ENCODE measurements at regions of chr1 and their contacts with region 1.

Region 1: GRCh38 chr1:114780344-114781226 is at the start of gene SIKE1:
- DNase-seq: peak; percentile 92
- H3K4me3 Mint-ChIP-seq: peak within 1 kb of the TSS; percentile 100
- H3K27ac Mint-ChIP-seq: peak within 1 kb of the TSS; percentile 96
- H3K4me1 Mint-ChIP-seq: peaks cover 34% of the 10 kb centered on the region
- H3K27me3 Mint-ChIP-seq: peaks cover 4% of the 10 kb centered on the region
- total RNA-seq, gene SIKE1: 59.4 and 65.0 TPM in 2 replicates

Region 2: GRCh38 chr1:114581335-114582287 is 199.0 kb before region 1 on chr1 and contains the start of gene BCAS2:
- intact Hi-C with region 1: loop called (anchors 1 kb)
- DNase-seq: peak; percentile 94
- H3K4me3 Mint-ChIP-seq: peak within 1 kb of the TSS; percentile 91
- H3K27ac Mint-ChIP-seq: peak within 1 kb of the TSS; percentile 92
- H3K4me1 Mint-ChIP-seq: peaks cover 34% of the 10 kb centered on the region
- H3K27me3 Mint-ChIP-seq: peaks cover 5% of the 10 kb centered on the region
- total RNA-seq, gene BCAS2: 61.9 and 63.0 TPM in 2 replicates

Region 3: DNA sequence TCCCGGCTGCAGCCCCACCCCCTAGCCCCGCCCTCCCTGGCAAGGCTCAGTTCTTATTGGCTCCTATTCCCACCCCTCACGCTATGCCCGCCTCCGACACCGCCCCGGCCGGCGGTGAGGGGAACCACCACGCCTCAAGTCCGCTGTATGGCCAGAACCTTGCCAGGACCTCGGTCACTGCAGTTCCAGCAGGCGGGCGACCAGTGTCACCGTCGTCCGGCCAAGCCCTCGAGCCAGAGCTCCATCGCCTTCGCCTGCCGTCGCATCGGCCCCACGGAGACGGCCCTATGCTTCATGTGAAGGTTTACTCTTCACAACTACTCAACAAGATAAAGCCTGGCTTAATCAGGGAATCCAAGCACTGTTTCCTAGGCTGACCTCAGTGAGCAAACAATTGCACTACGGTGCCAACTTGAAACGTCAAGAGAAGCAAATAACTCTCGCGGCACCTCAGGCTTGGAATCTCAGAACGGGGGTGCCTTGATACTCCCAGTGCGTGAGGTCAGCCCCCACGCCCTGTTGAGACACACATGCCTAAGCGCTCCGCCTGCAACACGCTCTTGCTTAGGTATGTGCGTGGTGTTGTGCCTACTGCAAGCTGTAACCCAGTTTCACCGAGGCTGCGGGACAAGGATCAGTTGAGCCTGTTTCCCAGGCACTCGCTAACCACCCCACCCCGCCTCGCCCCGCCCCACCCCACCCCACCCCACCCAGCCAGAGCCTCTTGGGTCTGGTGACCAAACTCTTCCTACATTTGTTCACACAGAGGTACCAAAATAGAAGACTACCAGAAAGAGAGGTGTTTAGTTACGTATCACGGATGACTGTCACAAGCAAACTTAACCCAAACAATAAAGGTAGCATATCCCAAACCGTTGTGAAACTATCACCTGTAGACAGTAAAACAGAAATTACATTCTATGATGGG is 110.2 kb before region 1 on chr1:
- intact Hi-C with region 1: loop called (anchors 1 kb)
- DNase-seq: peak; percentile 76
- H3K4me3 Mint-ChIP-seq: peak overlapping the region; percentile 89
- H3K27ac Mint-ChIP-seq: peak overlapping the region; percentile 20
- H3K4me1 Mint-ChIP-seq: peaks cover 8% of the 10 kb centered on the region
- H3K27me3 Mint-ChIP-seq: peaks cover 48% of the 10 kb centered on the region

Region 4: GRCh38 chr1:114745291-114745690 is 35.3 kb before region 1 on chr1:
- intact Hi-C with region 1: loop called (anchors 5 kb)
- DNase-seq: no peak
- H3K4me3 Mint-ChIP-seq: no peak overlapping the region
- H3K27ac Mint-ChIP-seq: no peak overlapping the region
- H3K4me1 Mint-ChIP-seq: peaks cover 55% of the 10 kb centered on the region
- H3K27me3 Mint-ChIP-seq: no peaks in the 10 kb centered on the region

Region 5: DNA sequence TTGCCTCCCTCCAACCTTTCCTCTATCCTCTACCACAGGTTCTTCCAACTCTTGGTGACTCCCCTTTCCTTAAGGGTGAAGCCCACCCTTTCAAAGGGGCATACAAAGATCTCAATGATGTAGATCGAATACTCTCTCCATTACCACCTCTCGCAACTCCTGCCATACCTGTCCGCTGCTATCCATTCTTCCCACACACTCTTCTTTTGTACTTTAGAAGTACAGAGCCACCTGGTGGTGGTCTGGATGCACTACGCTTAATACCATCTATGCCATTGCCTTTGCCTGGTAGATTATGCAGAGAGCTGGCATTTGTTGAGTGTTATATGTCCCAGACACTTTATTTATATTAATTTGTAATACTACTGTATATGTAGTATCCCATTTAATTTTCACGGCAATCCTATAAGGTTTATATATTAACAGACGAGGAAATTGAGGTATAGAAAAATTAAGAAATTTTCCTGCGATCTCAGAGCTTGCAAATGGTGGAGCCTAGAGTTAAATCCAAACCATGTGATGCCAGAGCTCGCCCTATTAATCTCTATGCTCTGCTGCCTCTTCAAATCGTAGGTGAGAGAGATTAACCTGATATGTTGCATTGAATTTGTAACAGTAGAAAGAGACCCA is 272.0 kb after region 1 on chr1:
- intact Hi-C with region 1: no loop called
- DNase-seq: peak; percentile 20
- H3K4me3 Mint-ChIP-seq: no peak overlapping the region
- H3K27ac Mint-ChIP-seq: no peak overlapping the region
- H3K4me1 Mint-ChIP-seq: peaks cover 13% of the 10 kb centered on the region
- H3K27me3 Mint-ChIP-seq: peaks cover 6% of the 10 kb centered on the region

Region 6: DNA sequence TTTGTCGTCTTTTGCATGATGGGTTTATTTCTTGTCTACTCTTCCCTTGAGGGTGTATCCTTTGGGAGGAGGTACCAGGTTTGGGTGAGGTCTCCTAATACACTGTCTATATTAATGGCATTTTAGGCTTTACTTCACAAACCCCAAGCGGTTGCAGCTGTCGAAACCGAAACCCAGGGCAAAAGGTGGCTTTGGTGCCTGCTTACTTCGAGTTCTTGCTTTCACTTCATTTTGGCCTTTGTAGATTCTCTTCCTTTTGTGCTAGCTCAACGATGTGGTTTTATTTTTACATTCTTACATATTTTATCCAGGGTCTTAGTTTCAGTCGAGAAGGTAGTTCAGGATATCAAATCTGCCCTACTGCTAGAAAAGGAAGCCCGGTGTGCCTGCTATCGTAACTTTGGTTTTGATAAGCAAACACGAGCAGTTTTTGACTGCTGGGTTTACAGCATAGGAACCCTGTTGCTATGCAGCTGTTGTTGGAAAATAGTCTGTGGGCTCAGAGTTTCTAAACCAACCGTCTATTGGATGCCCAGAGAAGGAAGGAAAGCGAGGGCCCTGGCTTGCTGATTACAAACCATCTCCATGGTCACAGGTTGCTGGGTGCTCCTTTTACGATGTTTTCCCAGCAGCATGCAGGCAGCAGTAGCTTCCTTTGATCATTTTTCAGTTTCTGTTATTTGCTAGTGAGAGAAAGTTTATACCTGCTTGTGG is 318.6 kb after region 1 on chr1:
- intact Hi-C with region 1: loop called (anchors 1 kb)
- DNase-seq: peak; percentile 70
- H3K4me3 Mint-ChIP-seq: peak overlapping the region; percentile 89
- H3K27ac Mint-ChIP-seq: peak overlapping the region; percentile 98
- H3K4me1 Mint-ChIP-seq: peaks cover 30% of the 10 kb centered on the region
- H3K27me3 Mint-ChIP-seq: peaks cover 16% of the 10 kb centered on the region